Panc1 (cell line): ENCODE measurements at regions of chr1 and their contacts with region 1.

Region 1: GRCh38 chr1:1310109-1310385 is 1.6 kb downstream of the PUSL1 start:
- DNase-seq: no peak
- ATAC-seq: no peak
- H3K4me3 ChIP-seq: peak overlapping the region; percentile 64 to 72; a peak in 3 of 4 replicates
- H3K27ac ChIP-seq: peak overlapping the region; percentile 77
- H3K4me1 ChIP-seq: peaks cover 30% of the 10 kb centered on the region
- H3K27me3 ChIP-seq: no peaks in the 10 kb centered on the region
- CTCF ChIP-seq: no peak

Region 2: GRCh38 chr1:1341549-1342021 is 31.5 kb after region 1 on chr1:
- CTCF ChIA-PET with region 1: interaction called, 11 read pairs
- POLR2A ChIA-PET with region 1: no interaction called
- in situ Hi-C with region 1: no loop called
- intact Hi-C with region 1: no loop called
- DNase-seq: no peak
- ATAC-seq: no peak
- H3K4me3 ChIP-seq: no peak overlapping the region
- H3K27ac ChIP-seq: no peak overlapping the region
- H3K4me1 ChIP-seq: peaks cover 33% of the 10 kb centered on the region
- H3K27me3 ChIP-seq: no peaks in the 10 kb centered on the region
- CTCF ChIP-seq: no peak